Ascending aorta (tissue), 2 donors: ENCODE measurements at regions of chr12 and their contacts with region 1.

Region 1: GRCh38 chr12:102095675-102096263 is 24.1 kb downstream of the NUP37 start:
- DNase-seq: no peak
- H3K4me3 ChIP-seq: no peak overlapping the region
- H3K27ac ChIP-seq: no peak overlapping the region
- H3K4me1 ChIP-seq: no peaks in the 10 kb centered on the region
- H3K27me3 ChIP-seq: no peaks in the 10 kb centered on the region
- CTCF ChIP-seq: peak in 1 of 3 experiments; percentile 13

Region 2: GRCh38 chr12:102454808-102455760 is 359.3 kb after region 1 on chr12:
- intact Hi-C with region 1: no loop called
- DNase-seq: peak in 1 of 2 donors; percentile 67
- H3K4me3 ChIP-seq: no peak overlapping the region
- H3K27ac ChIP-seq: no peak overlapping the region
- H3K4me1 ChIP-seq: no peaks in the 10 kb centered on the region
- H3K27me3 ChIP-seq: no peaks in the 10 kb centered on the region
- CTCF ChIP-seq: no peak

Region 3: DNA sequence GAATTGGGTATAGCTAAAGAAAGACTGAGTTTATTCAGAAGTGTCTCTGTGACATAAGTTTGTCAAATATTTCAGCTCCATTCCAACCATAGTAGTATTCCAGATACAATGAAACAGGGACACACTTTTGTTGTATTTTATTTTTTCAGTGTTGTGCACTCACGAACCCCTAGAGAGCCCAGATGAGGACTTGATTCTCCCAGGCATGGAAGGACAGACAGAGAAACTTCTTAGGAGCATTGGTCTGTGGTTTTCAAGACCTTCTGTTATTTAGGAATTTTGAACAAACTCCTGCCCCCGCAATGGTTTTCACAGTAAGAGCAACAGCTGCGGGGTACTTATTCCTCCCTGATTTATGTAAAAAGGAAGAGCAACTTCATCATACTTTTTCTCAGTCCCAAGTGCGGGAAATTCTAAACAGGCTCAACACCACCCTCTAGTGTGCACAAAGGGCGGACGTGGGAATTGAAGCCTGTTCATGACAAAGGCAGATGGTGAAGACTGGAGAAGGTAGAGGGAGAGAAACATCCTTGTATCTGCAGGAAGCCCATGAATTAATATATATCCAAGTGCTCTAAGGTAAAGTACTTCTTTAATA is 673.6 kb after region 1 on chr12:
- intact Hi-C with region 1: loop called (anchors 10 kb)
- DNase-seq: peak in 1 of 2 donors; percentile 67
- H3K4me3 ChIP-seq: no peak overlapping the region
- H3K27ac ChIP-seq: no peak overlapping the region
- H3K4me1 ChIP-seq: no peaks in the 10 kb centered on the region
- H3K27me3 ChIP-seq: no peaks in the 10 kb centered on the region
- CTCF ChIP-seq: peak in 2 of 3 experiments; percentile 26 to 49